ENCODE measurements at regions of chr5 and their contacts with region 1.

Region 1: GRCh38 chr5:159987031-159987674 is 21.8 kb upstream of the TTC1 start:
- DNase-seq: peak; percentile 62 to 84 (median 75)
- ATAC-seq: peak; percentile 66 to 95 (median 92)
- H3K4me3 ChIP-seq: peak overlapping the region; percentile 18 to 60 (median 46)
- H3K27ac ChIP-seq: no peak overlapping the region
- H3K4me1 ChIP-seq: peaks cover 0 to 9% (median 4%) of the 10 kb centered on the region in 12 donors
- H3K27me3 ChIP-seq: peaks cover 0 to 27% (median 2%) of the 10 kb centered on the region in 9 donors
- CTCF ChIP-seq: peak; percentile 38 to 81 (median 64)
- POLR2A ChIP-seq: no peak

Region 2: GRCh38 chr5:159156426-159157238 is 830.5 kb before region 1 on chr5:
- intact Hi-C with region 1: loop called in 2 of 10 experiments (anchors 10 kb)
- DNase-seq: peak in 1 of 5 donors; percentile 40
- ATAC-seq: peak; percentile 59 to 84 (median 78)
- H3K4me3 ChIP-seq: no peak overlapping the region
- H3K27ac ChIP-seq: peak overlapping the region in 1 of 12 donors; percentile 23
- H3K4me1 ChIP-seq: peaks cover 0 to 7% (median 0%) of the 10 kb centered on the region in 12 donors
- H3K27me3 ChIP-seq: no peaks in the 10 kb centered on the region
- CTCF ChIP-seq: peak; percentile 77 to 95 (median 89)
- POLR2A ChIP-seq: no peak

Region 3: DNA sequence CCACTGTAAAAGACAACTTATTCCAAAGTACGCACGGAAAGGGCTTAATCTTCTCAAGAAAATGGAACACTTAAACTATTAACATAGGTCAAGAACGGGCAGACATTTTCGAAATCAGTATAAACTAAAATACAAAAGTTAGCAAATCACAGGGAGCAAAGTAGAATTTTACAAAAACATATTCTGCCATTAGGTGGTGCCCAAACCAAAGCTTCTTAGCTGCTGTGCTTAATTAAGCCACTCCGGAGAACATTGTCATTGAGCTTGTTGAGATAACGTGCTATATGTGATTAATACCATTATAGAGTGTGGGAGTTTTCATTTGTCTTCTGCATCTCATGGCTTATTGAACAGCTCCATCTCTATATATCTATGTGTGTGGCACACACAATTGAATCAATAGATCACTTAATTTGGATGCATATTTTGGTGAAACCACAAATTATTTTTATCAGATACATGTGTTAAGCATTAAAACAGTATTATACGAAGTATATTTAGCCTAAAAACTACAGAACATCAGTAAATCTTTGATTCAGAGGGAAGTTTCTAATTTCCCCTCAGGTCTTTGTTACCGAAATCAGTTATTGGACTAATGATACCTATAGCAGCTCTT is 700.6 kb before region 1 on chr5:
- intact Hi-C with region 1: loop called in 8 of 10 experiments (anchors 2 to 10 kb)
- DNase-seq: no peak
- ATAC-seq: peak in 2 of 4 donors; percentile 54 to 55
- H3K4me3 ChIP-seq: no peak overlapping the region
- H3K27ac ChIP-seq: no peak overlapping the region
- H3K4me1 ChIP-seq: peaks cover 0 to 6% (median 0%) of the 10 kb centered on the region in 12 donors
- H3K27me3 ChIP-seq: no peaks in the 10 kb centered on the region
- CTCF ChIP-seq: peak; percentile 13 to 63 (median 43)
- POLR2A ChIP-seq: no peak

Region 4: DNA sequence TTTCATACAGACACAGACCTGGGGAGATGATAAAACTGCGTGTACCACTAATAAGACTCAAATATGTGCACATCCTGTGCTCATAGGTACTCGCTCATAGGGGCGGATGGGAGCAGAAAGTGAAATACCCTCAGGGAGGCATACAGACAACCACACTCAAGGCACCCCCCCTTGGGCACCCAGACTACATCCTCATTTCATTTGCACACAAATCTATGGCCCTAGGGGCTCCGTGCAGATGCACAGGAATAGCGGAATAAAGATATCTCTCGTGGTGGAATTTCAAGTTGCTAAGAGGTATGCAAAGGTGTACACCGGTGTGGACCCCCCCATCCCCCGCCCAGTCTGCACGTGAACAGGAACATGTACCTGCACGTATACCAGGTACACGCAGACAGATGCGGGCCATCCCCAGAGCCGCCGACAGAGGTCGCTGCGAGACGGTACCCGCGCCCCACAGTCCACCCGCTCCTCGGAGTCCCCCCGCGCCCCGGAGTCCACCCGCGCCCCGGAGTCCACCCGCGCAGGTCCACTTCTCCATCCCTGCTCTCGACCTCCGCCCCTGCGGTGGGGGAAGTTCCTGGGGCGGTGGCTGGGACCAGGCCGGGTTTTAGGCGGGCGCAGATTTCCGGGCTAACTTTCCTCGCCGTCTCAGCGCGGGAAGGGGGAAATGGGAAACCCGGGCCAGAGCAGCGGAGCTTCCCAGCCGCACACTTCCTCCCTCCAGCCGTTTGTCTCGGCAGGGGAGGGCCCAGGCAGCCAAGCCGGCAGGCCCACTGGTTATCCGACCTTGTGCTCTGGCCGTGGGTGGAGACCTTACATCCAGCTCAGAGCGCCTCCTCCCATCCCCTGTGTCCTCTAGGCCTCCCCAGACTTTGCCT is 655.8 kb before region 1 on chr5:
- intact Hi-C with region 1: loop called in 5 of 10 experiments (anchors 5 kb)
- DNase-seq: peak; percentile 64 to 85 (median 71)
- ATAC-seq: peak; percentile 52 to 95 (median 89)
- H3K4me3 ChIP-seq: peak overlapping the region in 11 of 12 donors; percentile 32 to 60 (median 54)
- H3K27ac ChIP-seq: peak overlapping the region in 7 of 12 donors; percentile 14 to 57 (median 28)
- H3K4me1 ChIP-seq: peaks cover 0 to 15% (median 6%) of the 10 kb centered on the region in 12 donors
- H3K27me3 ChIP-seq: peaks cover 0 to 12% (median 0%) of the 10 kb centered on the region in 9 donors
- CTCF ChIP-seq: peak; percentile 58 to 80 (median 73)
- POLR2A ChIP-seq: no peak

Region 5: DNA sequence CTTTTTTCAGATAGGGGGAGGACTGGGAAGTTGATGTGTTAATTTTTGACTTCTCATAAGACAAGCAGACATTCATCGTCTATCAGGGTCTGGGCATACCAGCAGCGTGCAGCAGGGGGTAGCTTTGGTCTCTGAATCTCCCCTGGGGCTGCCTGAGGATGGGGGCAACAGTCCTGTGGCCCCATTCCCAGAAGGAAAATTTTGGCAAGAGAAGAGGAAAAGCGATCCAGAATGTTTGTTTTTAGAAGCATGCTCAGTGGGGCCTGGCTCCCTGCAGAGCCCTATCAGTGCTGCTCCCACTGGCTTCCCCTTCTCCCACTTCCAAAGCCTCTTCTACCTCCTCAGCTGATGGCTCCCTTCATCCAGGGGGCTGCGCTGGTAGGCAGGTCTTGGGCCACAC is 462.0 kb before region 1 on chr5:
- intact Hi-C with region 1: loop called in 2 of 10 experiments (anchors 5 to 10 kb)
- DNase-seq: no peak
- ATAC-seq: peak in 2 of 4 donors; percentile 32 to 66
- H3K4me3 ChIP-seq: no peak overlapping the region
- H3K27ac ChIP-seq: no peak overlapping the region
- H3K4me1 ChIP-seq: peaks cover 0 to 10% (median 5%) of the 10 kb centered on the region in 12 donors
- H3K27me3 ChIP-seq: no peaks in the 10 kb centered on the region
- CTCF ChIP-seq: peak in 5 of 12 donors; percentile 11 to 43 (median 22)
- POLR2A ChIP-seq: no peak

Region 6: GRCh38 chr5:160565376-160565775 is 578.2 kb after region 1 on chr5:
- intact Hi-C with region 1: no loop called
- DNase-seq: no peak
- ATAC-seq: no peak
- H3K4me3 ChIP-seq: no peak overlapping the region
- H3K27ac ChIP-seq: no peak overlapping the region
- H3K4me1 ChIP-seq: no peaks in the 10 kb centered on the region
- H3K27me3 ChIP-seq: no peaks in the 10 kb centered on the region
- CTCF ChIP-seq: no peak
- POLR2A ChIP-seq: no peak

Measured in heart left ventricle (tissue), 16 donors.